ENCODE measurements at regions of chr17 and their contacts with region 1.

Region 1: GRCh38 chr17:4891411-4892342 is 7.7 kb upstream of the C17orf107 start:
- DNase-seq: peak in 1 of 2 donors; percentile 47
- ATAC-seq: no peak
- H3K4me3 ChIP-seq: no peak overlapping the region
- H3K27ac ChIP-seq: no peak overlapping the region
- H3K4me1 ChIP-seq: no peaks in the 10 kb centered on the region
- H3K27me3 ChIP-seq: no peaks in the 10 kb centered on the region
- CTCF ChIP-seq: no peak

Region 2: GRCh38 chr17:4733073-4733531 is 158.6 kb before region 1 on chr17:
- intact Hi-C with region 1: loop called (anchors 5 kb)
- DNase-seq: no peak
- ATAC-seq: no peak
- H3K4me3 ChIP-seq: no peak overlapping the region
- H3K27ac ChIP-seq: no peak overlapping the region
- H3K4me1 ChIP-seq: peaks cover 9% of the 10 kb centered on the region
- H3K27me3 ChIP-seq: peaks cover 0 to 5% (median under 1%) of the 10 kb centered on the region in 3 donors
- CTCF ChIP-seq: no peak

Region 3: GRCh38 chr17:4739122-4740024 is 152.3 kb before region 1 on chr17 and contains the starts of genes CXCL16 and ZMYND15:
- intact Hi-C with region 1: loop called (anchors 5 kb)
- DNase-seq: peak; percentile 57 to 72
- ATAC-seq: peak; percentile 53 to 76 (median 69)
- H3K4me3 ChIP-seq: peak within 1 kb of the TSS; percentile 92
- H3K27ac ChIP-seq: no peak within 1 kb of the TSS
- H3K4me1 ChIP-seq: peaks cover 7% of the 10 kb centered on the region
- H3K27me3 ChIP-seq: peaks cover 0 to 59% (median 13%) of the 10 kb centered on the region in 3 donors
- CTCF ChIP-seq: no peak
- total RNA-seq, gene CXCL16: 1.7 to 5.4 (median 2.8) TPM
- total RNA-seq, gene ZMYND15: 0.08 to 0.30 (median 0.15) TPM in 3 of 4 donors, not detected in the other

Region 4: GRCh38 chr17:4786106-4786511 is 105.6 kb before region 1 on chr17 and contains the start of gene VMO1:
- intact Hi-C with region 1: loop called (anchors 2 kb)
- DNase-seq: peak in 1 of 2 donors; percentile 61
- ATAC-seq: no peak
- H3K4me3 ChIP-seq: peak within 1 kb of the TSS; percentile 52
- H3K27ac ChIP-seq: no peak within 1 kb of the TSS
- H3K4me1 ChIP-seq: peaks cover 26% of the 10 kb centered on the region
- H3K27me3 ChIP-seq: peaks cover 0 to 51% (median 12%) of the 10 kb centered on the region in 3 donors
- CTCF ChIP-seq: no peak
- total RNA-seq, gene VMO1: 0.42 to 0.84 (median 0.64) TPM

Region 5: DNA sequence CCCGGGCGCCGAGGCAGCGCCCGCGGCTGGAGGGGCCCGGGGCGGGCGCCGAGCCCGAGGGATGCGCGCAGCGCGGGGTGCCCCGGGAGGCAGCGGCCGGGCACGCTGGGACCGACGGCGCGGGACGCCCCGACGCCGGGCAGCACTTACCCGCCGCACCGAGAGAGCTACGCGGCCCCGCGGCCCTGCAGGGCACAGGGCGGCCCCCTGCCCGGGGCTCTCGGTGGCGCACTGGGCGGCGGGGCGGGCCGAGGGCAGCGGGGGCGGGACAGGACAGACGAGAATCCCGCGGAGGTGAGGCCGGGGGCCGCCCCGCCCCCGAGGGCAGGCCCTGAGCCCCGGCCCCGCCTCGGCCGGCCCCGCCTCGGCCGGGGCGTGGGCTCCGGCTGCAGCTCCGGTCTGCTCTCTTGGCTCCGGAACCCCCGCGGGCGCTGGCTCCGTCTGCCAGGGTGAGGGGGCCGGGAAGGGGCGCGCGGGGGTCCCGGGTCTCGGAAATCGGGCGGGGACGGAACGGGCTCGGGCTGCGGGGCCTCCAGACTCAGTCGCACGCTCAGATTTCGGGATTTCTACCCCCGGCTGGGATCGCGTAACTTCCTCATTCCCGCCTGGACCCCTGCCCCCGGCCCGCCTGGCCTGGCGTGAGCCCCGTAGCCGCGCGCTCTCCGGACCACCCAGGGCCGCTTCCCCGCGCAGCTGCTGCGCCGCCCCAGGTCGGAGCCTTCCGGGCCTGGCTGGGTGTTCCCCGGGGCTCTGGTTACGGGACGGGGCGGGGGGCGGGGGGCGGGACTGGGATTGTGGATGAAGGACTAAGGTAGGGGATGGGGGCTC is 84.7 kb before region 1 on chr17 and contains the start of gene PLD2:
- intact Hi-C with region 1: no loop called
- DNase-seq: peak; percentile 87 to 92
- ATAC-seq: peak; percentile 96 to 99 (median 98)
- H3K4me3 ChIP-seq: peak within 1 kb of the TSS; percentile 87
- H3K27ac ChIP-seq: peak within 1 kb of the TSS; percentile 63
- H3K4me1 ChIP-seq: peaks cover 16% of the 10 kb centered on the region
- H3K27me3 ChIP-seq: no peaks in the 10 kb centered on the region
- CTCF ChIP-seq: no peak
- total RNA-seq, gene PLD2: 3.7 to 7.5 (median 4.3) TPM

Region 6: GRCh38 chr17:4852567-4853207 is 39.0 kb before region 1 on chr17:
- intact Hi-C with region 1: no loop called
- DNase-seq: no peak
- ATAC-seq: no peak
- H3K4me3 ChIP-seq: no peak overlapping the region
- H3K27ac ChIP-seq: no peak overlapping the region
- H3K4me1 ChIP-seq: peaks cover 9% of the 10 kb centered on the region
- H3K27me3 ChIP-seq: no peaks in the 10 kb centered on the region
- CTCF ChIP-seq: no peak